Mucosa of descending colon (tissue), 3 donors: ENCODE measurements at regions of chr9 and their contacts with region 1.

Region 1: GRCh38 chr9:132472199-132472598 is 62.2 kb downstream of the CFAP77 start:
- DNase-seq: no peak
- ATAC-seq: no peak
- H3K4me3 ChIP-seq: no peak overlapping the region
- H3K4me1 ChIP-seq: no peaks in the 10 kb centered on the region
- CTCF ChIP-seq: no peak

Region 2: DNA sequence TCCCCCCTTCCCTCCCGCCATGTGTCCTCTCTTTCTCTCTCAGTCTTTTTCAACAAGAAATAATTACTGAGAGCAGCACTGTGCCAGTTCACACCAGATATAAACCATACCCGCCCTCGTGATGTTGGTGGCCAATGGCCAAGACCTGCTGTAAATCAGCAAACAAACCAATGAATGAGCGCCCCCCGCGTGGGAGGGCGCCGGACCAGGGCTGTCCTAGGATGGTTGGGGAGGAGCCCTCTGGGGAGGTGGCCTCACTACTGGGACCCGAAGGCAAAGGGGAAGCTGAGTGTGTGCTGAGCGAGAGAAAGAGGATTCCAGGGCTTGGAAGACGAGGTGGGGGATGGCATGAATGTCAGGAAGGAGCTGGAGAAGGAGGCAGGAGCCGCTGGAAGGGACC is 59.0 kb after region 1 on chr9:
- intact Hi-C with region 1: loop called in 1 of 2 experiments (anchors 10 kb)
- DNase-seq: peak in 1 of 3 donors; percentile 23
- ATAC-seq: no peak
- H3K4me3 ChIP-seq: no peak overlapping the region
- H3K4me1 ChIP-seq: no peaks in the 10 kb centered on the region
- CTCF ChIP-seq: no peak